Posterior vena cava (tissue), 2 donors: ENCODE measurements at regions of chr20 and their contacts with region 1.

Region 1: GRCh38 chr20:56945059-56945458 is 316.0 kb downstream of the TFAP2C start:
- DNase-seq: no peak

Region 2: GRCh38 chr20:56278196-56278595 is 666.9 kb before region 1 on chr20:
- intact Hi-C with region 1: loop called in 1 of 2 experiments (anchors 10 kb)
- DNase-seq: no peak